PC-9 (cell line): ENCODE measurements at regions of chr4 and their contacts with region 1.

Region 1: DNA sequence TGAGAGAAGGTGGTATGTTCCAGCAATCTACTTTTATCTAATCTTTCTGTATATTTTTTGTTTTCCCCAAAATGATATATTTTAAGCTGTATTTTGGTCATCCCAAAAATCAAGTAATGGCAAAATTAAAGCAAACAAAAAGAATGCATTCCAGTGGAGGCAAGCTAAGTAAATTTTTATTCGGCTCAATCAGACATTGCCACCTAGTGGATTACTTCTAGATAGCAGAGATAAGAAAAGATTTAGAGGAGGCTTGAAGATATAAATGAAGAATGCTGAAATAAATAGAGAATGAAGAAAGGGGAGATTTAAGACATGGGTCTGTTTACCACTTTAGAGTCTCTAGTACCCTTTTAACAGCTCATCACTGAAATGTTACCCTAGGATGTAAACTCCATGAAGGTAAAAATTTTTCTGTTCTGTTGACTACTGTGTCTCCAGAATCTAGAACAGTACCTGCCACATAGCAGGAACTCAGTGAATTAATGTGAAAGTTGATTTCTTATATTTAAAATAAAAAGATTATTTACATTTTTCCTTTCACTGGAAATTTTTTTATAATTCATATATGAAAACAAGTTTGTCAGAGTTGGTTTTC is 110.9 kb upstream of the ANK2 start:
- DNase-seq: no peak
- H3K4me3 ChIP-seq: no peak overlapping the region
- H3K27ac ChIP-seq: no peak overlapping the region
- H3K4me1 ChIP-seq: no peaks in the 10 kb centered on the region
- H3K27me3 ChIP-seq: no peaks in the 10 kb centered on the region
- CTCF ChIP-seq: peak; percentile 72

Region 2: DNA sequence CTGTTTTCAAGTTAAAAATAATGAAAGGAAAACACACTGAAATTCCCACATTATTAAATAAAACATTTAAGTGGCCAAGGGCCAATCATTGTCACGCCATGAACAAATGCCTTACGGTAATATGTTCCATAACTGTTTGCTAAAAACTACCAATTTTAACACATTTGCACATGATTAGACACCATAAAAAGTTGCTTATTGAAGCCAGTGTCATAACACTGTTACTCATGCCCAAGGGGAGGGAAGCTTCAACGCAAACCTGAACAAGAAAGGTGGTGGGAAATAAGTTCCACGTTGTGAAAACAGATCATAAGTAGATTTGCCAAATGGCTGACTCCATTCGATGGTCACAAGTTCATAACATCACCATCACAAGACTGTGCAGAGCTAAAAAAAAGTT is 1532.6 kb before region 1 on chr4:
- CTCF ChIA-PET with region 1: no interaction called
- POLR2A ChIA-PET with region 1: no interaction called
- intact Hi-C with region 1: no loop called
- DNase-seq: no peak
- H3K4me3 ChIP-seq: no peak overlapping the region
- H3K27ac ChIP-seq: no peak overlapping the region
- H3K4me1 ChIP-seq: no peaks in the 10 kb centered on the region
- H3K27me3 ChIP-seq: no peaks in the 10 kb centered on the region
- CTCF ChIP-seq: no peak

Region 3: GRCh38 chr4:112636688-112637551 is 301.6 kb before region 1 on chr4 and contains the starts of genes LARP7 and ZGRF1:
- CTCF ChIA-PET with region 1: no interaction called
- POLR2A ChIA-PET with region 1: no interaction called
- intact Hi-C with region 1: loop called (anchors 5 kb)
- DNase-seq: peak; percentile 97 to 98
- H3K4me3 ChIP-seq: peak within 1 kb of the TSS; percentile 76
- H3K27ac ChIP-seq: peak within 1 kb of the TSS; percentile 78
- H3K4me1 ChIP-seq: peaks cover 20% of the 10 kb centered on the region
- H3K27me3 ChIP-seq: no peaks in the 10 kb centered on the region
- CTCF ChIP-seq: peak; percentile 100
- total RNA-seq, gene LARP7: 35.8 and 47.8 TPM in 2 replicates
- total RNA-seq, gene ZGRF1: 17.3 and 18.9 TPM in 2 replicates

Region 4: GRCh38 chr4:113232194-113232593 is 293.6 kb after region 1 on chr4:
- CTCF ChIA-PET with region 1: no interaction called
- POLR2A ChIA-PET with region 1: no interaction called
- intact Hi-C with region 1: no loop called
- DNase-seq: no peak
- H3K4me3 ChIP-seq: no peak overlapping the region
- H3K27ac ChIP-seq: no peak overlapping the region
- H3K4me1 ChIP-seq: no peaks in the 10 kb centered on the region
- H3K27me3 ChIP-seq: no peaks in the 10 kb centered on the region
- CTCF ChIP-seq: no peak